IMR-90 (cell line): ENCODE measurements at regions of chr9 and their contacts with region 1.

Region 1: GRCh38 chr9:128117613-128118471 is 9.7 kb downstream of the PTGES2 start:
- DNase-seq: peak; percentile 80
- ATAC-seq: peak; percentile 89
- H3K4me3 ChIP-seq: no peak overlapping the region
- H3K27ac ChIP-seq: no peak overlapping the region
- H3K4me1 ChIP-seq: no peaks in the 10 kb centered on the region
- H3K27me3 ChIP-seq: no peaks in the 10 kb centered on the region
- CTCF ChIP-seq: peak; percentile 100; the same call in 1 of the 2 replicates
- POLR2A ChIP-seq: peak; percentile 50; the same call in 1 of the 2 replicates
- RAD21 ChIP-seq: peak; percentile 98

Region 2: GRCh38 chr9:127742435-127743088 is 375.3 kb before region 1 on chr9:
- CTCF ChIA-PET with region 1: no interaction called
- POLR2A ChIA-PET with region 1: no interaction called
- dilution Hi-C with region 1: no loop called
- in situ Hi-C with region 1: no loop called
- intact Hi-C with region 1: loop called (anchors 5 kb)
- DNase-seq: peak; percentile 62
- ATAC-seq: peak; percentile 72
- H3K4me3 ChIP-seq: peak overlapping the region; percentile 18; the same call in 1 of the 2 replicates
- H3K27ac ChIP-seq: no peak overlapping the region
- H3K4me1 ChIP-seq: no peaks in the 10 kb centered on the region
- H3K27me3 ChIP-seq: peaks cover 19% of the 10 kb centered on the region
- CTCF ChIP-seq: no peak
- POLR2A ChIP-seq: no peak
- RAD21 ChIP-seq: no peak

Region 3: GRCh38 chr9:128098297-128099230 is 19.3 kb before region 1 on chr9:
- CTCF ChIA-PET with region 1: interaction called, 16 read pairs
- POLR2A ChIA-PET with region 1: no interaction called
- dilution Hi-C with region 1: no loop called
- in situ Hi-C with region 1: no loop called
- intact Hi-C with region 1: no loop called
- DNase-seq: peak; percentile 98
- ATAC-seq: peak; percentile 75
- H3K4me3 ChIP-seq: peak overlapping the region; percentile 47
- H3K27ac ChIP-seq: peak overlapping the region; percentile 86
- H3K4me1 ChIP-seq: peaks cover 32% of the 10 kb centered on the region
- H3K27me3 ChIP-seq: no peaks in the 10 kb centered on the region
- CTCF ChIP-seq: no peak
- POLR2A ChIP-seq: peak; percentile 99
- RAD21 ChIP-seq: 0 out of 2 replicates have a peak, but pooled peaks have one; percentile 1